Left cardiac atrium (tissue), 4 donors: ENCODE measurements at regions of chr1 and their contacts with region 1.

Region 1: DNA sequence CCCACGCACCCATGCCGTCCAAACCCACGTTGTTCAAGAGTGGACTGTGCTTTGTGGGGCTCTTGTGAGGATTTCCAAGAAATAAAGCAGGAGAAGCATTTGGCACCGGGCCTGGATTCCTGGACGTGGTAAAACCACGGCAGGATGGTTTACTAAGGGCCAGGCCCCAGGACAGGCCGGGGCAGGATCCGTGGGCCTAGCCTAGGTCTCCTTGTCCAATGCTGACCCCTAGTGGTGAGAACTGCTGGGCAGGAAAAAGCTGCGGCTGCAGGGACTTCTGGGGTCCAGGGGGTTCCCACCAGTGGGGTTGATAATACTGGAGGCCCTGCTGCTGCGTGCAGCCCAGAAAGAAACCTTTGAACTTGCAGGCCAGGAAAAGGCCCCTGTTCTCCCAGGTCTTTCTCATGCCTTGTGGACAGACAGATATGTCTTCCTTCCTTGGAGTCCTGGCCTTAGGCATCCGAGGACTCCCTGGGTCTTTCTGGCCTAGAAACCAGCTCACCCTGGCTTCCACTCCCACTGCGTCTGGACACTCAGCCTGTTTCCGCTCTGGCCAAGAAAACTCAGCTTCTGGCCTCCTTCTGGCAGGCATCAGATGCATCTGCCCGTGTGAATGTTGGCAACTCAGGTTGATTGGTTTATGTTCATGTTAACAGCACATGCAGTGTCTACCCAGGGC is 106.9 kb upstream of the TMEM51 start:
- DNase-seq: peak; percentile 78
- ATAC-seq: peak; percentile 78 to 84

Region 2: GRCh38 chr1:14778898-14779865 is 267.4 kb before region 1 on chr1:
- intact Hi-C with region 1: loop called in 1 of 2 experiments (anchors 5 kb)
- DNase-seq: peak; percentile 33
- ATAC-seq: no peak